ENCODE measurements at regions of chr3 and their contacts with region 1.

Region 1: GRCh38 chr3:86774082-86774691 is 216.8 kb downstream of the VGLL3 start:
- DNase-seq: no peak
- H3K4me3 ChIP-seq: no peak overlapping the region
- H3K27ac ChIP-seq: no peak overlapping the region
- H3K4me1 ChIP-seq: no peaks in the 10 kb centered on the region
- H3K27me3 ChIP-seq: no peaks in the 10 kb centered on the region
- CTCF ChIP-seq: peak in 2 of 3 experiments; percentile 20 to 35; a peak in 2 of 4 replicates
- EP300 ChIP-seq: no peak
- POLR2A ChIP-seq: no peak
- RAD21 ChIP-seq: peak; percentile 57 to 69

Region 2: GRCh38 chr3:87082796-87083440 is 308.7 kb after region 1 on chr3:
- CTCF ChIA-PET with region 1: interaction called, 69 read pairs
- POLR2A ChIA-PET with region 1: no interaction called
- DNase-seq: peak; percentile 5 to 45
- H3K4me3 ChIP-seq: no peak overlapping the region
- H3K27ac ChIP-seq: no peak overlapping the region
- H3K4me1 ChIP-seq: peaks cover 0 to 3% (median under 1%) of the 10 kb centered on the region in 4 experiments; a peak in 3 of 7 replicates
- H3K27me3 ChIP-seq: peaks cover 0 to 1% (median 0%) of the 10 kb centered on the region in 4 experiments; a peak in 1 of 7 replicates
- CTCF ChIP-seq: peak in 2 of 3 experiments; percentile 69; a peak in 3 of 4 replicates
- EP300 ChIP-seq: no peak
- POLR2A ChIP-seq: no peak
- RAD21 ChIP-seq: peak; percentile 90 to 92

Region 3: GRCh38 chr3:87145553-87145952 is 371.4 kb after region 1 on chr3:
- CTCF ChIA-PET with region 1: interaction called, 13 read pairs
- POLR2A ChIA-PET with region 1: no interaction called
- DNase-seq: peak; percentile 43 to 76
- H3K4me3 ChIP-seq: no peak overlapping the region
- H3K27ac ChIP-seq: no peak overlapping the region
- H3K4me1 ChIP-seq: 0 out of 7 replicates have a peak, but pooled peaks cover 0 to 2% (median 0%) of the 10 kb centered on the region in 4 experiments
- H3K27me3 ChIP-seq: no peaks in the 10 kb centered on the region
- CTCF ChIP-seq: peak; percentile 52 to 76 (median 60)
- EP300 ChIP-seq: no peak
- POLR2A ChIP-seq: no peak
- RAD21 ChIP-seq: peak; percentile 49 to 60

Region 4: DNA sequence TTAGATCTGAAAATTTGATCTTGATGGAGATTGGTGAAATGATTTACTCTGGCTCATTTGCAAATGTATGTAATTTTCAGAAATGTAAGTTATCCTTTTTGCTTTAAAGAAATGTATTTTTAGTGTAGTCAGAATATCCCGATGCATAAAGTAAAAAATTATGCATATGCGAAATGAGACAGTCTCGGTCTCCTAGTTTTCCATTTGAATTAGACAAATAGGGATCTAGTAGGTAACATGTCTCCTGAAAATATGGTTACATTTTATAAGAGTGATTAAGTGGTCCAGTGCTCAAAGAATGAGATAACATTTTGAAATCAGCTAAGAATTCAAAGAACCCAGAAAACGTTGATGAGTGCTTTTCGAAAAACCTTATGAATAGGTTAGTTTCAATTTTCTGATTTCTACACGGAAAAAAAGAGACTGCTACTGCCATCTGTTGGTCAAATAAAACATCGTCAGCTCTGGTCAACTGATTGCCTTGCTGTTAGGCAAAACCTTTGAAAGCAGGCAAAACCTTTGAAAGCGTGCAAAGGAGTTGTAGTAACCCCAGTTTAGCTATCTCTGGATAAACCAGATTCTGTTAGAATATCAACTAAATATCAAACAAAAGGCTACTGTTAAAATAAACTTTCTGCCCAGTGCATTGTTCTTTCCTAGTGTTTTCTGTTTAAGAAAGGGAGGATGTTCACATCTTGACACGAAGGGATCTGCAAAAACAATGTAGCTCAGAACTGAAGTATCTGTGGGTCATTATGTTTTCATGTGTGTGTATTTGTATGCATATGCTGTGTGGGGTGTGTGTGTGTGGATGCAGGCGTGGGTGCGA is 393.7 kb after region 1 on chr3:
- CTCF ChIA-PET with region 1: interaction called, 26 read pairs
- POLR2A ChIA-PET with region 1: no interaction called
- DNase-seq: no peak
- H3K4me3 ChIP-seq: no peak overlapping the region
- H3K27ac ChIP-seq: no peak overlapping the region
- H3K4me1 ChIP-seq: no peaks in the 10 kb centered on the region; a peak in 1 of 7 replicates
- H3K27me3 ChIP-seq: no peaks in the 10 kb centered on the region
- CTCF ChIP-seq: peak in 2 of 3 experiments; percentile 54 to 65; a peak in 3 of 4 replicates
- EP300 ChIP-seq: no peak
- POLR2A ChIP-seq: no peak
- RAD21 ChIP-seq: peak; percentile 61 to 75

Region 5: DNA sequence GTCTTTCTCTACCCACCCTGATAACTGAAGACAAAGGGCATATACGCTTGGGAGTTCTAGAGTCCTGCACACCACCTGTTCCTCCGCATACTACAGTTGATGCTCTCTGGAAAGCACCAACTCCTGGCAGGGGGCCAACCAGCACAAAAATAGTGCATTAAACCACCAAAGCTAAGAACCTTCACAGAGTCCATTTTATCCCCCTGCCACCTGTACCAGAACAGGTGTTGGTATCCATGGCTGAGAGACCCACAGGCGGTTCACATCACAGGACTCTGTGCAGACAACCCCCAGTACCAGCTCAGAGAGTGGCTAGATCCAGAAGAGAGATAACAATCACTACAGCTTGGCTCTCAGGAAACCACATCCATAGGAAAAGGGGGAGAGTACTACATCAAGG is 616.6 kb after region 1 on chr3:
- CTCF ChIA-PET with region 1: no interaction called
- POLR2A ChIA-PET with region 1: no interaction called
- DNase-seq: no peak
- H3K4me3 ChIP-seq: no peak overlapping the region
- H3K27ac ChIP-seq: no peak overlapping the region
- H3K4me1 ChIP-seq: no peaks in the 10 kb centered on the region
- H3K27me3 ChIP-seq: no peaks in the 10 kb centered on the region
- CTCF ChIP-seq: no peak
- EP300 ChIP-seq: no peak
- POLR2A ChIP-seq: no peak
- RAD21 ChIP-seq: no peak